Heart left ventricle (tissue), 16 donors: ENCODE measurements at regions of chr3 and their contacts with region 1.

Region 1: DNA sequence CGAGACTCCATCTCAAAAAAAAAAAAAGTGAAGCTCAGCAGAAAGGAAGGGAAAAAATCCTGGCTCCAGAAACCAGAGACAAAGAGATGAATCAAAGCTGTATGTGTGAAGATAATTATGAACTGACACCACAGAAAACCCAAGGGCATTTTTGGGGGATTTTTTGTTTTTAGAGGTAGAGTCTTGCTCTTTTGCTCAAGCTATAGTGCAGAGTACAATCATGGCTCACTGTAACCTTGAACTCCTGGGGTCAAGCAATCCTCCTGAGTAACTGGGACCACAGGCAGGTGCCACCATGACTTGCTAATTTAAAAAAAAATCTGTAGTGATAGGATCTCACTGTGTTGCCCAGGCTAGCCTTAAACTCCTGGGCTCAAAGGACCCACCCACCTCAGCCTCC is 22.8 kb downstream of the HCLS1 start:
- DNase-seq: no peak
- ATAC-seq: no peak
- H3K4me3 ChIP-seq: no peak overlapping the region
- H3K27ac ChIP-seq: no peak overlapping the region
- H3K4me1 ChIP-seq: no peaks in the 10 kb centered on the region
- H3K27me3 ChIP-seq: no peaks in the 10 kb centered on the region
- CTCF ChIP-seq: no peak
- POLR2A ChIP-seq: no peak

Region 2: DNA sequence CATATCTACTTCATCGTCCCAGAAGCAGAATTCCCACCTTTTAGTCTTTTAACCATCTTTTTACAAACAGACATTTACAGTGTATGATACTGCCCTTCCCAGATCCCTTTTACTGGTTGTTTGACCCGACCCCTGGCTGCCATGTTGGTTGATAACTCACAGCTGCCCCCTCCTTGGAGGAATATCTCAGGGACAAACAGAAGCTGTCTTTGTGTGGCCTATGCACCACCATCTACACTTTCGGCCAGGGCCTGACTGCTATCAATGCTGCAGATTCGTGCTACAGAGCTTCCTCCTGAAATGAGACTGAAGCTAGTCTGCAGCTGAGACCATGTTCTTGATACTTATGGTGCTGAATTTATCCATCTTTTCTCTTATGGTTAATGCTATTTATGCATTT is 85.5 kb before region 1 on chr3:
- intact Hi-C with region 1: loop called in 2 of 10 experiments (anchors 10 kb)
- DNase-seq: no peak
- ATAC-seq: no peak
- H3K4me3 ChIP-seq: peak overlapping the region in 5 of 12 donors; percentile 13 to 25 (median 20)
- H3K27ac ChIP-seq: no peak overlapping the region
- H3K4me1 ChIP-seq: peaks cover 0 to 7% (median 0%) of the 10 kb centered on the region in 12 donors
- H3K27me3 ChIP-seq: no peaks in the 10 kb centered on the region
- CTCF ChIP-seq: no peak
- POLR2A ChIP-seq: no peak